Endothelial cell of umbilical vein (primary cell): ENCODE measurements at regions of chrX and their contacts with region 1.

Region 1: DNA sequence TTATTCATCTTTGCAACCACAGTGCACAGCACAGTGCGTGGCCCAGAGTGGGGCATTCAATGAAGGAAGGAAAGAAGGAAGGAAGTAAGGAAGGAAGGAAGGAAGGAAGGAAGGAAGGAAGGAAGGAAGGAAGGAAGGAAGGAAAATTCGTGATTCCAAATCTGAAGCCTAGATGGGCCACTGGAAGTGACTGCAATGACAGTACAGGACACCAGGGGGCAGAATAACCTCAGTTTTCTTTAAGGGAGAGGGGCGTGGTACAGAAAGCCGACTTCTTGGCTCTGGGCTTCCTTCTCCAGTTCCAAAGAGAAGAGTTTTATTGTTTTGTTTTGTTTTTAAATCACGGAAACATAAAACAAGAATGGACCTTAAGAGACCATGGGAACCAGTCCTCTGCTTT is 47.8 kb downstream of the APLN start:
- DNase-seq: peak; percentile 48
- H3K4me3 ChIP-seq: no peak overlapping the region
- H3K27ac ChIP-seq: no peak overlapping the region
- H3K4me1 ChIP-seq: peaks cover 12% of the 10 kb centered on the region
- H3K27me3 ChIP-seq: no peaks in the 10 kb centered on the region
- CTCF ChIP-seq: peak; percentile 42 to 51
- POLR2A ChIP-seq: no peak

Region 2: GRCh38 chrX:129622757-129623341 is 15.9 kb after region 1 on chrX:
- CTCF ChIA-PET with region 1: interaction called, 13 read pairs
- POLR2A ChIA-PET with region 1: no interaction called
- dilution Hi-C with region 1: no loop called
- intact Hi-C with region 1: loop called (anchors 1 kb)
- DNase-seq: peak; percentile 85
- H3K4me3 ChIP-seq: no peak overlapping the region
- H3K27ac ChIP-seq: peak overlapping the region; percentile 99
- H3K4me1 ChIP-seq: peaks cover 18% of the 10 kb centered on the region
- H3K27me3 ChIP-seq: no peaks in the 10 kb centered on the region
- CTCF ChIP-seq: no peak
- POLR2A ChIP-seq: no peak

Region 3: GRCh38 chrX:129654419-129655165 is 47.7 kb after region 1 on chrX and contains the start of gene APLN:
- CTCF ChIA-PET with region 1: interaction called, 9 read pairs
- POLR2A ChIA-PET with region 1: no interaction called
- dilution Hi-C with region 1: no loop called
- intact Hi-C with region 1: loop called (anchors 1 kb)
- DNase-seq: peak; percentile 55
- H3K4me3 ChIP-seq: peak within 1 kb of the TSS; percentile 58 to 78 (median 67)
- H3K27ac ChIP-seq: peak within 1 kb of the TSS; percentile 69
- H3K4me1 ChIP-seq: peaks cover 42% of the 10 kb centered on the region
- H3K27me3 ChIP-seq: no peaks in the 10 kb centered on the region
- CTCF ChIP-seq: no peak
- POLR2A ChIP-seq: peak; percentile 92
- total RNA-seq, gene APLN: 465 and 466 TPM in 2 replicates

Region 4: DNA sequence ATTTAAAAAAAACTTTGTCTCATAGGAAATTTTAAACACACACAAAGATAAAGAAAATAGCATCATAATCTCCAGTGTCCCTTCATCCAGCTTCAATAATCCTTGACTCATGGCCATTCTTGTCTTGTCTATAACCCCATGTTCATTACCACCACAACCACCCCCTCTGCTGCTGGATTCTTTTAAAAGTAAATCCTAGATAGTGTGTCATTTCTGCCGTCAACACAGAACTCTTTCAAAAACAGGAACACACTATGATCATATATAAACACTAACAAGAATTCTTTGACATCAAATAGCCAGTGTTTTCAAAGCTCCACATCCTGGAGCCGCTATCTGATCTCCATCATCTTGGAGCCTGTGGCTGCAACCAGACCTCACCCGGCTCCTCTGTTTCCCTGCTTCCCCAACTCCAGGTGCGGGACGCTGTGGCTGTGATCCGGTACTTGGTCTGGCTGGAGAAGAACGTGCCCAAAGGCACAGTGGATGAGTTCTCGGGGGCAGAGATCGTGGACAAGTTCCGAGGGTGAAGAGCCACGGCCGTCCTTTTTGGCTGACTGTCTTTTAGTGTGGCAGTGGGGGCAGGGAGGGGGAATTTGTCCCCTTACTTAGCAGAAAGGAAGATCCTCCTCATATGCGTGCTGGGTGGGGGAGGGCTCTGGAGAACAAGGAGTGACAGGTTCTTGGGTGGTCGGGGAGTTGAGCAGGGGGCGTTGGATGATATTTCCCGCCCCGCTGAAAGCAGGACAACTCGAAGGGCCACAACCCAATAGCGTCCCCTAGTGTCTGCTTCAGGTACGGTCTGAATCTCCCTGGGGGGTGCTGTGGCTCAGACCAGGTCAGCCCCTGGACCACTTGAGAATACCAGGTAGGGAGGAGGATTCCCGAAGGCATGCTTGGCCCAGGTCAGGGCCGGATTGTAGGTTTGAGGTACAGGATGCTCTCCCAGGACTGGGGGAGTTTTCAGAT is 147.4 kb after region 1 on chrX:
- CTCF ChIA-PET with region 1: interaction called, 4 read pairs
- POLR2A ChIA-PET with region 1: no interaction called
- dilution Hi-C with region 1: no loop called
- intact Hi-C with region 1: loop called (anchors 1 kb)
- DNase-seq: peak; percentile 4
- H3K4me3 ChIP-seq: no peak overlapping the region
- H3K27ac ChIP-seq: no peak overlapping the region
- H3K4me1 ChIP-seq: no peaks in the 10 kb centered on the region
- H3K27me3 ChIP-seq: no peaks in the 10 kb centered on the region
- CTCF ChIP-seq: peak; percentile 36 to 50
- POLR2A ChIP-seq: no peak

Region 5: GRCh38 chrX:129905787-129906580 is 299.1 kb after region 1 on chrX and contains the start of gene UTP14A:
- CTCF ChIA-PET with region 1: interaction called, 5 read pairs
- POLR2A ChIA-PET with region 1: no interaction called
- dilution Hi-C with region 1: no loop called
- intact Hi-C with region 1: loop called (anchors 1 kb)
- DNase-seq: peak; percentile 88
- H3K4me3 ChIP-seq: peak within 1 kb of the TSS; percentile 69 to 97 (median 96)
- H3K27ac ChIP-seq: peak within 1 kb of the TSS; percentile 64
- H3K4me1 ChIP-seq: peaks cover 6% of the 10 kb centered on the region
- H3K27me3 ChIP-seq: no peaks in the 10 kb centered on the region
- CTCF ChIP-seq: no peak
- POLR2A ChIP-seq: peak; percentile 61
- total RNA-seq, gene UTP14A: 23.5 and 27.7 TPM in 2 replicates

Region 6: GRCh38 chrX:130060122-130061069 is 453.5 kb after region 1 on chrX:
- CTCF ChIA-PET with region 1: interaction called, 34 read pairs
- POLR2A ChIA-PET with region 1: no interaction called
- dilution Hi-C with region 1: no loop called
- intact Hi-C with region 1: loop called (anchors 1 kb)
- DNase-seq: peak; percentile 59
- H3K4me3 ChIP-seq: peak overlapping the region; percentile 28 to 51 (median 31)
- H3K27ac ChIP-seq: peak overlapping the region; percentile 48
- H3K4me1 ChIP-seq: peaks cover 7% of the 10 kb centered on the region
- H3K27me3 ChIP-seq: no peaks in the 10 kb centered on the region
- CTCF ChIP-seq: peak; percentile 62 to 69
- POLR2A ChIP-seq: no peak